Tibial artery (tissue), 4 donors: ENCODE measurements at regions of chr1 and their contacts with region 1.

Region 1: DNA sequence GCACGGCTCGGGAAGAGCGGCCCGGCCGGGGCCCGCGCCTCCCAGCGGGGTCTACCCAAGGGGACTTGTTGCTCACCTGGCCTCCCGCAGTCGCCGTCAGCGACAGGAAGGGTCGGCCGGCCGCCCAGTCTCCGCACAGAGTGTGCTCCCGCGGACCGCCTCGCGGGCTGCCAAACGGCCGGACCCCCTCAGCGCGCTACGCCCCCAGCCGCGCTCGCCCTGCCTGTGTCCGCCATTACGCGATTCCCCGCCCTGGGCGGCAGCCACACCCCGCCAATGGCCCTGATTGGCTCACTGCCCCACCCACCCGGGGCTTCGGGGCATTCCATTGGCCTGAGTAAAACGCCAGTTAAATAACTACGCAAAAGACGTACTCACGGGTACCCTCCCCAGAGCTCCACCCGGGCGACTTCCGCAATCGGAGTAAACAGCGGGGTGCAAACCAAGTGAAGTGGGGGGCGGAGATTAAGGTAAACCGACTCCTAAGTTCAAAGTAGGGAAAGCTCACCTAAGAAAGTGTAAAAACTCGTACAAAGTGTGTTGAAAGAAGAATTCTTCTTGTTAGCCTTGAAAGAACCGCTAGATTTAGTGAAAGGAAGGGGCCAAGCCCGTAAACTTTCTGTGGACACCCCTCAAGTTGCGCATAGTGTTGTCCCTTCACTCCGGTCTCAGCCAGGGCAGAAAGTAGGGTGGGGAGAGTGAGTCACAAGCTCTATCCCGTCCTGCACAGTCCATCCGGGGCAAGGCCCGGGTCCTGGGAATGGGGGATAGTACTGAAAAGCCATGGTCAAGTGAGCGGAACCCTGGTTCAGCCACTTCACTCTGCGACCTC is at the start of gene WASF2:
- DNase-seq: peak; percentile 97 to 98
- H3K4me3 ChIP-seq: peak within 1 kb of the TSS; percentile 97 to 99
- H3K27ac ChIP-seq: peak within 1 kb of the TSS; percentile 98 to 100
- H3K4me1 ChIP-seq: peaks cover 8 to 52% (median 31%) of the 10 kb centered on the region in 4 donors
- H3K27me3 ChIP-seq: no peaks in the 10 kb centered on the region
- CTCF ChIP-seq: no peak

Region 2: GRCh38 chr1:27436204-27437159 is 53.6 kb before region 1 on chr1:
- intact Hi-C with region 1: loop called (anchors 10 kb)
- DNase-seq: peak in 1 of 2 donors; percentile 56
- H3K4me3 ChIP-seq: peak overlapping the region; percentile 4 to 19
- H3K27ac ChIP-seq: peak overlapping the region; percentile 61 to 89
- H3K4me1 ChIP-seq: peaks cover 0 to 84% (median 57%) of the 10 kb centered on the region in 4 donors
- H3K27me3 ChIP-seq: no peaks in the 10 kb centered on the region
- CTCF ChIP-seq: no peak

Region 3: GRCh38 chr1:27525296-27526272 is 35.5 kb after region 1 on chr1:
- intact Hi-C with region 1: loop called (anchors 5 kb)
- DNase-seq: peak; percentile 72 to 93
- H3K4me3 ChIP-seq: peak overlapping the region; percentile 19
- H3K27ac ChIP-seq: peak overlapping the region; percentile 86 to 89
- H3K4me1 ChIP-seq: peaks cover 15 to 91% (median 82%) of the 10 kb centered on the region in 4 donors
- H3K27me3 ChIP-seq: no peaks in the 10 kb centered on the region
- CTCF ChIP-seq: no peak

Region 4: DNA sequence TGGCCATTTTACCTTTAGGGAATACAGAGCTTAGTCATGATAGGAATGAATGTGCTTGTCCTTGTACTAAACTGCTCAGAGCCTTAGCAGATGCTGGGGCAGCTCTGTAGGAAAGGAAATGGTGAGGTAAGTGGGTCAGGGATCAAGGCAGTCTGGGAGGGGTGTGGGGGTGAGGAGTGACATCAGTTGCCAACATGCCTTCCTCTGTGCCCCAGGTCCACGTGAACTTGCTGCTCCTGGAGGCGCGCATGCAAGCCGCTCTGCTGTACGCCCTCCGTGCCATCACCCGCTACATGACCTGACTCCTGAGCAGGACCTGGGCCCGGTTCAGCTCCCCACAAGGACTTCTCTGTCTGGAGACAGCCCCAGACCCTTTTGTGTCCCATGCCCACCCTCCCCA is 790.4 kb after region 1 on chr1:
- intact Hi-C with region 1: no loop called
- DNase-seq: no peak
- H3K4me3 ChIP-seq: no peak overlapping the region
- H3K27ac ChIP-seq: no peak overlapping the region
- H3K4me1 ChIP-seq: no peaks in the 10 kb centered on the region
- H3K27me3 ChIP-seq: no peaks in the 10 kb centered on the region
- CTCF ChIP-seq: no peak